IMR-90 (cell line): ENCODE measurements at regions of chr10 and their contacts with region 1.

Region 1: GRCh38 chr10:73816917-73817729 is 5.7 kb upstream of the NDST2 start:
- DNase-seq: no peak
- ATAC-seq: no peak
- H3K4me3 ChIP-seq: no peak overlapping the region
- H3K27ac ChIP-seq: peak overlapping the region; percentile 88
- H3K4me1 ChIP-seq: peaks cover 10% of the 10 kb centered on the region
- H3K27me3 ChIP-seq: no peaks in the 10 kb centered on the region
- CTCF ChIP-seq: no peak
- POLR2A ChIP-seq: no peak
- RAD21 ChIP-seq: no peak

Region 2: GRCh38 chr10:74051736-74052342 is 234.7 kb after region 1 on chr10:
- CTCF ChIA-PET with region 1: no interaction called
- POLR2A ChIA-PET with region 1: interaction called, 17 read pairs
- dilution Hi-C with region 1: no loop called
- in situ Hi-C with region 1: no loop called
- intact Hi-C with region 1: no loop called
- DNase-seq: no peak
- ATAC-seq: no peak
- H3K4me3 ChIP-seq: no peak overlapping the region
- H3K27ac ChIP-seq: 0 out of 2 replicates have a peak overlapping the region, but pooled peaks have one; percentile 33
- H3K4me1 ChIP-seq: peaks cover 30% of the 10 kb centered on the region
- H3K27me3 ChIP-seq: no peaks in the 10 kb centered on the region
- CTCF ChIP-seq: no peak
- POLR2A ChIP-seq: no peak
- RAD21 ChIP-seq: no peak